Ovary (tissue), 10 donors: ENCODE measurements at regions of chr4 and their contacts with region 1.

Region 1: DNA sequence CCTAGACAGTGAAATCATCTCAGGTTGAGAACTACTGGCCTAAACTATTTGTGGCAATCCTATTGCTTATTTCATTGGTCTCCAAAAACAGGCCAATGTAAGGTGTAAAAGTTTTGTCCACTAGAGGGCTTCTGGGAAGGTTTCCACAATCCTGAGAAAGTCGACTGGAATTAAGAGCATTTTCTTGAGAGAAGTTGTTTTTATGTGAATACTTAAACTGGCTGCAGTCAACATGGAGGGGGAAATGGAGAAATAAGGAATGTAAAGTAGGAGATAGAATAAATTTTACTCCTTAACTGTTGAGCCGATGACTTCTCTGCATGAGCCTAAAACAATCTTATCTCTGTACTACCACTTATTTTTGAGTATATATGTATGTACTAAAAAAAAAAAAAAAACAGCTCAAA is 11.0 kb upstream of the EIF4E start:
- DNase-seq: no peak
- H3K4me3 ChIP-seq: no peak overlapping the region
- H3K27ac ChIP-seq: no peak overlapping the region
- H3K4me1 ChIP-seq: no peaks in the 10 kb centered on the region
- H3K27me3 ChIP-seq: no peaks in the 10 kb centered on the region
- CTCF ChIP-seq: peak; percentile 18 to 46 (median 45)
- EP300 ChIP-seq: no peak
- POLR2A ChIP-seq: no peak

Region 2: DNA sequence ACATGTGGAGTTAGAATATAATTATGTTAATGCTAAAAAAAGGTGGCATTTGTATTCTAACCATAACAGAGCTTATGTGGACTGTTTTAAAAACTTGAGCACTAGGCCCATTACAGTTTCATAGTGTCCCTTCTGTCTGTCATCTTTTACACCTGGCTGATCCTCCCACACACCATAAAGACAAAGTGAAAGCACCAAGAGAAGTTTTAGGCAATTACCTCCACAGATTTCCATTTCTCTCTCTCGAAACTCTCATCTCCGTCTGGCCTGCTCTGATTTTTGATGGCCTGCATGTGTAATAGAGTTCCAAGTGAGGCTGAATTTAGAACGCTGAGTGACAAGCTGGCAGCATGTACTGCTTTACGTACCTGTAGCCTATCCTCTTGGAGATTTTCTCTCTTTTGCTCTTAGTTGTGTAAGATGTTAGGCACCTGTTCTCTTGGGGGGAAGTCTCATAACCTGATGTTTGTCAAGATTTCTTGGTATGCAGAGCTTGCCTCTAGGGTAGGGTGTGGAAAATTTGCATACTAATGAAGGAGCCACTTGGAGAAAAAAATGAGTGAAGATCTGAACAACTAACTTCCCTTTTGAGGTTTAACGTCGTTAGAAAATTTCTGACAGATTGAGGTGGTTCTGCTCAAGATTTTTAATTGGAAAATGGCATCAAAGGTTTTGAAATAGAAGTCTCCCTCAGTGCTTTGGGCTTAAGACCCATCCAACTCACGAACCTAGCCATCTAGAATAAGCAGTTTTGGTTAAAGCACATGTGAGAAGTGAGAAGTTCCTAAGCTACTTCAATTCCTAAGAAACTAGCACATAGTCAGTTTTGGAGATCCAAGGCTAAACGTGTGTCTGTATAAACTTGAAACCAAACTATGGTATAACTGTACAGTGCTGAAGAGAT is 736.3 kb before region 1 on chr4:
- intact Hi-C with region 1: no loop called
- DNase-seq: no peak
- H3K4me3 ChIP-seq: no peak overlapping the region
- H3K27ac ChIP-seq: no peak overlapping the region
- H3K4me1 ChIP-seq: no peaks in the 10 kb centered on the region
- H3K27me3 ChIP-seq: no peaks in the 10 kb centered on the region
- CTCF ChIP-seq: no peak
- EP300 ChIP-seq: no peak
- POLR2A ChIP-seq: no peak

Region 3: DNA sequence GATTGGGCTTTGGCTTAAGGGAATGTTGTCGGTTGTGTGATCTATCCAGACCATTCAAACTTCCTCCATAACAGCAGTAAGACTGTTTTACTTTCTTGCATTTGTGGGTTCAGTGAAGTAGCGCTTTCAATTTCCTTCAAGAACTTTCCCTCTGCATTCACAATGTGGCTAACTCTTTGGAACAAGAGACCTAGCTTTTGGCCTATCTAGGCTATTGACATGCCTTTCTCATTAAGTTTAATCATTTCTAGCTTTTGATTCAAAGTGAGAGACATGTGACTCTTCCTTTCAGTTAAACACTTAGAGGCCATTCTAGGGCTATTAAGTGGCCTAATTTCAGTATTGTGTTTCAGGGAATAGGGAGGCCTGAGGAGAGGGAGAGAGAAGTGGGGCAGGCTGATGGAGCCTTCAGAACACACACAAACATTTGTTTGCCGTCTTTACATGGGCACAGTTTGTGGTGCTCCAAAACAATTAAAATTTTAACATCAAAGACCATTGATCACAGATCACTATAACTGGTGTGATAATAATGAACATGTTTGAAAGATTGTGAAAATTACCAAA is 114.6 kb after region 1 on chr4:
- intact Hi-C with region 1: loop called in 1 of 4 experiments (anchors 2 kb)
- DNase-seq: no peak
- H3K4me3 ChIP-seq: no peak overlapping the region
- H3K27ac ChIP-seq: no peak overlapping the region
- H3K4me1 ChIP-seq: no peaks in the 10 kb centered on the region
- H3K27me3 ChIP-seq: no peaks in the 10 kb centered on the region
- CTCF ChIP-seq: no peak
- EP300 ChIP-seq: no peak
- POLR2A ChIP-seq: no peak